ENCODE measurements at regions of chr12 and their contacts with region 1.

Region 1: DNA sequence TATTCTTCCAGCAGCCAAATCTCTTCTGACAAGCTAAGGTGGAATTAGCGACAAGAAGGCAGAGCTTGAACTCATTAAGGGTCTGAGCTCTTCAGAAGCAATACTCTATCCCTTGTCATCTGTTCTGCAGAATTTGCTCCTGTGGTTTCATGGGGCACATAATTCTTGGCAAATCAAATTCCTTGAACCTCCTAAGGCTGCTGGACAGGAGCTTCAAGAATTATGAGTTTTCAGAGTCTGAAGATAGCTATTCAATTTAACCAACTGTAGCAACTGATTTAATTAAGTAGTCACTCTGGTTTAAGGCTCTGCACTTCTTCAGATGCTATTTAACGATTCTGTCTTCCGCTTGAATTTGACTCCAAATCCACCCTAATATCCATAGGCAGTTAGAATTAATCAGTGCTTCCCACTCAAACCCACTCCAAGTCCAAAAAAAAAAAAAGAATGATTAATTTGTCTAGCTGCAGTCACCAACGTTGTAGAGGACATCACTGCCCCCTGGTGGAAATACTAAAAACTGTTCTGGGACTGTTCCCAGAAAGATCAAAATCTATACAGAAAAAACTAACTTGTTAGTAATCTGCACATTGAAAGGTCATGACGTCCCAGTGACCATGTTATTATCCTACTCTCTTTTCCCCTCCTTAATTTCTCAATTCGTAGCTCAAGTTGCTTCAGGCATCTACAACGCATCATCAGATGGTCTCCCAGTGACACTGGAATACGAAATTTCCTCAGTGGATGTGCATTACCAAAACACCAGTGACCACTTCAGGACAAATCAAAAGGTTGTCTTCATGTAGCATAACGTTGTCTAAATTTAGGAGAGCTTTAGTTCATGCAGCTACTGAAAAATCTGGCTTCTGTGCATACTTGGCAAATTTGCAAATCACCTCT is 169.8 kb downstream of the KIF21A start:
- DNase-seq: peak; percentile 45
- H3K4me3 ChIP-seq: no peak overlapping the region
- H3K27ac ChIP-seq: no peak overlapping the region
- H3K4me1 ChIP-seq: no peaks in the 10 kb centered on the region
- H3K27me3 ChIP-seq: no peaks in the 10 kb centered on the region
- CTCF ChIP-seq: peak; percentile 68

Region 2: DNA sequence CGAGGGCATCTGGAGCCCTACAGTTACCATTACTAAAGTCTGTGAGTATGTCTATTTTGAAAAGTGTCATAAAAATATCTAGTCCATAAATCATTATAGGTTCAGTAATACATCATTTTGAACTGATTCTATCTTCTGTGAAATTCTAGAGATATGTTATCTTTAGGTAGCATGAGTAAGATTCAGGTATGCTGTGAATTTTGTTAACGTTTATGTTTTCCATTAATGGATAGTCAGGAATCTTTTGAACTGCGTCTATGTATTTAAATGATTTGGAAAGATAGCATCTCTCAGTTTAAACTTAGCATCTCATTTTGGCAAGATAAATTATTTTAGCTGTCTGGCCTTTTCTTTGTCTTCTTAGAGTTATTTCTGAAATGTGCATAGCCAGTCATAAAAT is 948.2 kb before region 1 on chr12:
- intact Hi-C with region 1: loop called (anchors 5 kb)
- DNase-seq: no peak
- H3K4me3 ChIP-seq: no peak overlapping the region
- H3K27ac ChIP-seq: no peak overlapping the region
- H3K4me1 ChIP-seq: no peaks in the 10 kb centered on the region
- H3K27me3 ChIP-seq: no peaks in the 10 kb centered on the region
- CTCF ChIP-seq: no peak

Region 3: DNA sequence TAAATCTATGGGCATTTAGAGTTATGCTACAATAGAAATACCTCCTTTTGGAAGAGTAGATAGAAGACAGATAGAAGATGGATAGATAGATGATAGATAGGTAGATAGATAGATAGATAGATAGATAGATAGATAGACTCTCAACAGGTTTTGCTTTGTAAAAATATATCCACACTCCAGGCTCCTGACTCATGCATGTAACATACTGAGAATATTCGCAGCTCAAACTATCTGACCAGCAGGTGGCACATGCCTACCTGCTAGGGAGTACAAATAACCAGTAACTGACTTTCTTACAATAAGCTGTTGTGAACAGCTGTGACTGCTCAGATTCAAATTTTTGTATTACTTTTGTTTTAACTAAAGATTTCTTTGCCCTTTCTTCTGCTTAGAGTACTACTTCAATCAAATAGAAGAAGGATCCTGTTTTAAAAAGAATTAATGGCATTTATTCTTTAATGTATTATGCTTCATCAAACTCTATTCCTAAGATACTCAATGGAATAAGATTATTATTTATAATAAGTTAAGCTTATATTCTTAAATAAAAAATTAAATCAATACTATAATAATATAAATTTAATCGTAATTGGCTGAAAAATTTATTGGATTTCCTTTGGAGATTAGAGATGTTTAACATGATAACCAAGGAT is 352.0 kb before region 1 on chr12:
- intact Hi-C with region 1: loop called (anchors 5 kb)
- DNase-seq: peak; percentile 50
- H3K4me3 ChIP-seq: no peak overlapping the region
- H3K27ac ChIP-seq: no peak overlapping the region
- H3K4me1 ChIP-seq: no peaks in the 10 kb centered on the region
- H3K27me3 ChIP-seq: no peaks in the 10 kb centered on the region
- CTCF ChIP-seq: peak; percentile 48

Region 4: GRCh38 chr12:39122562-39123204 is 150.4 kb before region 1 on chr12:
- intact Hi-C with region 1: loop called (anchors 5 kb)
- DNase-seq: peak; percentile 29
- H3K4me3 ChIP-seq: no peak overlapping the region
- H3K27ac ChIP-seq: no peak overlapping the region
- H3K4me1 ChIP-seq: no peaks in the 10 kb centered on the region
- H3K27me3 ChIP-seq: no peaks in the 10 kb centered on the region
- CTCF ChIP-seq: no peak

Region 5: GRCh38 chr12:39173726-39174125 is 99.4 kb before region 1 on chr12:
- intact Hi-C with region 1: no loop called
- DNase-seq: no peak
- H3K4me3 ChIP-seq: no peak overlapping the region
- H3K27ac ChIP-seq: no peak overlapping the region
- H3K4me1 ChIP-seq: no peaks in the 10 kb centered on the region
- H3K27me3 ChIP-seq: no peaks in the 10 kb centered on the region
- CTCF ChIP-seq: no peak

Measured in colonic mucosa (tissue), 4 donors.